ENCODE measurements at regions of chr15 and their contacts with region 1.

Region 1: GRCh38 chr15:51229907-51230330 is 108.5 kb downstream of the CYP19A1 start:
- DNase-seq: no peak

Region 2: DNA sequence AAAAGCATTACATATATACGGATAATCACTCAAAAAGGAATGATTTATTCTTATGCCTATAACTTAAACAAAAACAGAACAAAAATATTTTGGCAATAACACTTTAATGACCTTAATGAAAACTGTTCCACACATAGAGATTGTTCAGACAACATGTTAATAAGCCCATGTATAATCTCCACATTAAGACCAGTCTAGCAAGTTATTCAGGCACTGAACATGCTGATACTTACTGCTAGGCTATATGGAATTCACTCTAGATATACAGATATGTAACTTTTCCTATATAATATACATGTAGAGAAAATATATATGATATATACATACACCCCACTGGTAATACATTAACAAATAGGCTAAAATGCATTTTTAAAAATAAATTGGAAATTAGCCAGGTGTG is 639.6 kb before region 1 on chr15:
- intact Hi-C with region 1: no loop called
- DNase-seq: no peak

Region 3: GRCh38 chr15:51267703-51268083 is 37.8 kb after region 1 on chr15:
- intact Hi-C with region 1: loop called (anchors 5 kb)
- DNase-seq: peak in 8 of 10 donors; percentile 27 to 91 (median 45)

Region 4: DNA sequence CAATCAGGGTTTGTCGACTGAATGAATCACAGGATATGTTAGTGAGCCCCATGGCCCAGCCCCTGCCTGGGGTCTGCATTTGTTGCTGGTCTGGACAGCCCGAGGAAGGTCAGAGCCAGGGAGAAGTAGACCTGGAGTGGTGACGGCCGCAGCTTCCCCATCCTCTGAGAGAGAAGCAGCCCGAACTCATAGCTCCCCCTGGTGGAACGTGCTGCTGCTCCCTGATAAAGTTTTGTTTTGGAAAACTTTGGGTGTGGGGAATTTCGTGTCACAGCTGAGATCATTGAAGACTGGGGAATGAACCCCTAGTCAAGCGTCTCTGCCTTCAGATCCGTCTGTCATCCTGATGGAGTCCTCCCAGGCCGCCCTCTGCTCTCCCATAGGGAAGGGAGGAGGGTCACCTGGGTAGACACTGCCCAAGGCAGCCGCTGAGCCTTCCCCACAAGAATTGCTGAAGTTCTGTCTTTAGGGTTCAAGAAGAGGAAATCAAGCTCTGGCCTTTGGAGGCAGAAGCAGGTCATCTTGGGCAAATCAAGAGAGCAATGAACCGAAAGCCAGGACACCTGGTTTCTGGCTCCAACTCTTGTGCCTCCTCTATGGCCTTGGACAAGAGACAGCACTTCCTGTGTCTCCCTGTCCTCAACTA is 172.1 kb after region 1 on chr15:
- intact Hi-C with region 1: loop called (anchors 5 kb)
- DNase-seq: peak in 8 of 10 donors; percentile 41 to 93 (median 58)

Measured in posterior cingulate gyrus (tissue), 11 donors.